ENCODE measurements at regions of chr1 and their contacts with region 1.

Region 1: GRCh38 chr1:236281654-236282424 is at the start of gene ERO1B:
- DNase-seq: peak; percentile 96
- H3K4me3 Mint-ChIP-seq: peak within 1 kb of the TSS; percentile 90
- H3K27ac Mint-ChIP-seq: peak within 1 kb of the TSS; percentile 69
- H3K4me1 Mint-ChIP-seq: peaks cover 42% of the 10 kb centered on the region
- H3K27me3 Mint-ChIP-seq: peaks cover 1% of the 10 kb centered on the region
- total RNA-seq, gene ERO1B: 2.7 to 2.9 TPM

Region 2: GRCh38 chr1:235866913-235867845 is 414.7 kb before region 1 on chr1:
- CTCF ChIA-PET with region 1: no interaction called
- POLR2A ChIA-PET with region 1: no interaction called
- intact Hi-C with region 1: loop called (anchors 5 kb)
- DNase-seq: peak; percentile 98
- H3K4me3 Mint-ChIP-seq: peak overlapping the region; percentile 89
- H3K27ac Mint-ChIP-seq: peak overlapping the region; percentile 98
- H3K4me1 Mint-ChIP-seq: peaks cover 45% of the 10 kb centered on the region
- H3K27me3 Mint-ChIP-seq: no peaks in the 10 kb centered on the region

Region 3: DNA sequence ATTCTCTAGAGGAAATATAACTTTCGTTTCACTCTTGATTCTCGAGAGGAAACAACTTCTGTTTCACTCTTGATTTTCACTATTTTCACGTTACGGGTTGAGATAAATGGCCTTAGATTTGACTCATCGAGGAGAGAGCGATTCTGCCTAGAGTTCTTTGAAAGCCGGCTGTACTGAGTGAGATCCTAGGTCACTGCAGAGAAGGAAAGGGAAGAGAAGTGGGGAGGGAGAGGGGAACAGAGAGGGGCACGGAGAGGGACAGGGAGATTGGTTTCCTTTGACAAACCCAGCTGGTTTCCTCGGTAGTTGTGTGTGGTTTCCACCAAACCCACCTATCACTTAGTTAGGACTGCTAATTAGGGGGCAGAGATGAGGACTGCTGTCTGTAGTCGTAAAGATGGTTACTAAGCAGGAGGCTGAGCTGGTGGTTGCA is 161.1 kb before region 1 on chr1:
- CTCF ChIA-PET with region 1: no interaction called
- POLR2A ChIA-PET with region 1: no interaction called
- intact Hi-C with region 1: loop called (anchors 2 kb)
- DNase-seq: no peak
- H3K4me3 Mint-ChIP-seq: no peak overlapping the region
- H3K27ac Mint-ChIP-seq: no peak overlapping the region
- H3K4me1 Mint-ChIP-seq: peaks cover 26% of the 10 kb centered on the region
- H3K27me3 Mint-ChIP-seq: peaks cover 7% of the 10 kb centered on the region

Region 4: DNA sequence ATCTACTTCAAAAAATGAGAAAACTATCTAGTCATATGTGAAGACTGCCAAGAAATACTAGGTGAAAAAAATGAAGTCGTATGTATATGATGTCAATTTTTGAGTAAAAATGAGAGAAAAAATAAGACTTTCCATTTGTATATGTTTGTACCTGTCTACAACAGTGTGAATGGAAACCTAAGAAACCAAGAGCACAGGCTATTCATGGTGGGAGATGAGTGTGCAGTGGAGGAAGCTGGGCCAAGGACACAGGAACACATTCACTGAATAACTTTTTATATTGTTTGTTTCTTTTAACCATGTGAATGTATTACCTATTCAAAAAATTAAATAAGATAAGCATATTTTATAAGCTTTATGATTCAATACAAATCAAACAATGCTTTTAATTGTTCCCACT is 67.1 kb before region 1 on chr1:
- CTCF ChIA-PET with region 1: no interaction called
- POLR2A ChIA-PET with region 1: no interaction called
- intact Hi-C with region 1: loop called (anchors 2 kb)
- DNase-seq: peak; percentile 32
- H3K4me3 Mint-ChIP-seq: no peak overlapping the region
- H3K27ac Mint-ChIP-seq: no peak overlapping the region
- H3K4me1 Mint-ChIP-seq: peaks cover 5% of the 10 kb centered on the region
- H3K27me3 Mint-ChIP-seq: no peaks in the 10 kb centered on the region

Region 5: GRCh38 chr1:236489710-236490377 is 208.0 kb after region 1 on chr1:
- CTCF ChIA-PET with region 1: no interaction called
- POLR2A ChIA-PET with region 1: no interaction called
- intact Hi-C with region 1: loop called (anchors 5 kb)
- DNase-seq: no peak
- H3K4me3 Mint-ChIP-seq: no peak overlapping the region
- H3K27ac Mint-ChIP-seq: no peak overlapping the region
- H3K4me1 Mint-ChIP-seq: peaks cover 22% of the 10 kb centered on the region
- H3K27me3 Mint-ChIP-seq: peaks cover 7% of the 10 kb centered on the region

Region 6: GRCh38 chr1:236603991-236604904 is 322.4 kb after region 1 on chr1 and contains the start of gene HEATR1:
- CTCF ChIA-PET with region 1: no interaction called
- POLR2A ChIA-PET with region 1: no interaction called
- intact Hi-C with region 1: loop called (anchors 5 kb)
- DNase-seq: peak; percentile 94
- H3K4me3 Mint-ChIP-seq: peak within 1 kb of the TSS; percentile 97
- H3K27ac Mint-ChIP-seq: peak within 1 kb of the TSS; percentile 91
- H3K4me1 Mint-ChIP-seq: peaks cover 21% of the 10 kb centered on the region
- H3K27me3 Mint-ChIP-seq: peaks cover 9% of the 10 kb centered on the region
- total RNA-seq, gene HEATR1: 67.5 to 70.1 TPM

Measured in activated CD4-positive, alpha-beta memory T cell treated with anti-CD3 and anti-CD28 coated beads for 36 hours (primary cell).